Left colon (tissue), 2 donors: ENCODE measurements at regions of chr15 and their contacts with region 1.

Region 1: DNA sequence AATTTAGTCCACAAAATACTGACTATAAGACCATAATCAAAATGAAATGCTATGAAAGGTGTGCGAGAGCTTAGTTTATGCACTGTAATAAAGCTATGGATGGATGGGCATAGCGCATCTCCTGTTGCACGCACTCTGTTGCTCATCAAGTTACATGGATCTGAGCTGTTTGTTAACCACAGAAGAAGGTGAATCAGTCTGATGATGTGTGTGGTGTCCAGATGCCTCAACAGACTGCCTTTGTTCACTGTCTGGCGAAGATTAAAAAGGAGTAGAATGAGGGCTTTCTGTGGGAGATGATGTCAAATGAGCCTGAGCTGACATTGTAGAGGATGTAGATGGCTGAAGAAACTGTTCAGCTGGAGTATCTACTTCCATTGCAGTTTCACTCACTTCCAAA is 36.1 kb downstream of the NSMCE3 start:
- DNase-seq: no peak
- ATAC-seq: no peak

Region 2: DNA sequence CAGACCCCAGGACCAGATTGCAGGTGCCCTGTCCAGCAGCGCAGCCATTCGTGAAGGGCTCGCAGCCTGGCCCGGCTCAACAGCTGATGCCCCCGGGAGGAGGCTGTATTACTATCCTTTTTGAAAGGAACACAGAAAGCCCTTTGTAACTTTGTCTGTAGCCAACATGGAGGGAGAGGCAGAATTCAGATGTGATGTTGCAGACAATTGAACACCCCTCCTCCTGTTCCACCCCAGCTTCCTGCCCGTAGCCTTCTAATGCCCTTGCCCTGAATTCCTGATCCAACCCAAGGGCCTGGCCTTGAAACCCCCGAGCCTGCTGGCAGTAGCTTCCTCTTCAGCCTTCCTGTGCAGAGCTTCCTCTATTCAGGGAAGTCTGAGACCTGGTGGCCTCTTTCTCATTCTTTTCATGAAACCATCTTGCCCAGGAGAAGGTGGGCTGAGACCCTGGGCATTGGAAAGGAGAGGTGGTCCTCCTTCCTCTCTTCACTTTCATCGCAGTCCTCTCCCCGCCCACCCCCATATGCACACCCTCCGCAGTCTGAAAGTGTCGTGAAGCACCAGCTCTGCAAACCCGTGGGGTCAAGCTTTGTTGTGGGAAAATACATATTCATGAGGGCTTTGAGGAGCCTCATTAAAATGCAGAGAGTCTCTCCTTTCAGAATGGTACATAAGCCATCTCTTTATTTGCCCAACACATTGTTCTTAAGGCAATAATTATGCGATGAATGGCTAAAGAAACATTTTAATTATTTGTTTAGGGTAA is 238.6 kb before region 1 on chr15:
- intact Hi-C with region 1: no loop called
- DNase-seq: no peak
- ATAC-seq: no peak

Region 3: GRCh38 chr15:29309139-29309538 is 75.6 kb after region 1 on chr15:
- intact Hi-C with region 1: loop called in 1 of 2 experiments (anchors 10 kb)
- DNase-seq: no peak
- ATAC-seq: no peak